ENCODE measurements at regions of chr5 and their contacts with region 1.

Region 1: GRCh38 chr5:95969055-95969454 is 7.4 kb upstream of the ELL2 start:
- DNase-seq: no peak
- ATAC-seq: no peak
- H3K4me3 ChIP-seq: no peak overlapping the region
- H3K4me3 Mint-ChIP-seq: no peak overlapping the region
- H3K27ac ChIP-seq: no peak overlapping the region
- H3K27ac Mint-ChIP-seq: no peak overlapping the region
- H3K4me1 ChIP-seq: no peaks in the 10 kb centered on the region
- H3K4me1 Mint-ChIP-seq: peaks cover 0 to 3% (median 0%) of the 10 kb centered on the region in 3 donors
- H3K27me3 ChIP-seq: no peaks in the 10 kb centered on the region
- H3K27me3 Mint-ChIP-seq: peaks cover 0 to 7% of the 10 kb centered on the region in 2 donors

Region 2: GRCh38 chr5:95609711-95610110 is 359.3 kb before region 1 on chr5:
- CTCF ChIA-PET with region 1: no interaction called
- POLR2A ChIA-PET with region 1: interaction called in 1 of 2 experiments, 15 read pairs
- DNase-seq: no peak
- ATAC-seq: no peak
- H3K4me3 ChIP-seq: no peak overlapping the region
- H3K4me3 Mint-ChIP-seq: no peak overlapping the region
- H3K27ac ChIP-seq: no peak overlapping the region
- H3K27ac Mint-ChIP-seq: no peak overlapping the region
- H3K4me1 ChIP-seq: no peaks in the 10 kb centered on the region
- H3K4me1 Mint-ChIP-seq: peaks cover 0 to 10% (median 2%) of the 10 kb centered on the region in 3 donors
- H3K27me3 ChIP-seq: no peaks in the 10 kb centered on the region
- H3K27me3 Mint-ChIP-seq: no peaks in the 10 kb centered on the region